ENCODE measurements at regions of chr9 and their contacts with region 1.

Region 1: DNA sequence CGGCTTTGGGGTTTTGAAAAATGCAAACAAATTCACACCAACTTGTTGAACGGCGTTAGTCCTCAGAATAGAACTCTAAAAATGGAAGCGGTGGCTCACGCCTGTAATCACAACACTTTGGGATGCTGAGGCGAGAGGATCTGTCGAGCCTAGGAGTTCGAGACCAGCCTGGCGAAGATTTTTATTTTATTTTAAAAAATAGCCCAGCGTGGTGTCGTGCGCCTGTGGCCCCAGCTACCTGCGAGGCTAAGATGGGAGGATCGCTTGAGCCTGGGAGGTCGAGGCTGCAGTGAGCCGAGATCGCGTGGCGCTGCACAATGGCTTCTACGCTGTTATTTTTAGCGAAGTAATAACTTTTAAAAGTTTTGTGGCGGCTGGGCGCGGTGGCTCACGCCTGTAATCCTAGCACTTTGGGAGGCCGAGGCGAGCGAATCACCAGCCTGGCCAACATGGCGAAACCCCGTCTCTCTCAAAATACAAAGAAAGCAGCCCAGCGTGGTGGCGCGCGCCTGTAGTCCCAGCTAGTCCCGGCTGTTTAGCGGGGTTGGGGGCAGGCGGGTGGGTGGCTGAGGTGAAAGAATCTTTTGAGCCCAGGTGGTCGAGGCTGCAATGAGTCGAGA is 699 bp upstream of the PLIN2 start:
- DNase-seq: peak; percentile 50
- ATAC-seq: peak; percentile 26
- H3K4me3 Mint-ChIP-seq: peak overlapping the region; percentile 94
- H3K27ac Mint-ChIP-seq: peak overlapping the region; percentile 97
- H3K4me1 Mint-ChIP-seq: peaks cover 56% of the 10 kb centered on the region
- H3K27me3 Mint-ChIP-seq: no peaks in the 10 kb centered on the region

Region 2: GRCh38 chr9:18955626-18956025 is 172.4 kb before region 1 on chr9:
- CTCF ChIA-PET with region 1: no interaction called
- POLR2A ChIA-PET with region 1: no interaction called
- DNase-seq: no peak
- ATAC-seq: no peak
- H3K4me3 Mint-ChIP-seq: no peak overlapping the region
- H3K27ac Mint-ChIP-seq: no peak overlapping the region
- H3K4me1 Mint-ChIP-seq: no peaks in the 10 kb centered on the region
- H3K27me3 Mint-ChIP-seq: peaks cover 4% of the 10 kb centered on the region

Region 3: GRCh38 chr9:19161257-19162025 is 33.5 kb after region 1 on chr9:
- CTCF ChIA-PET with region 1: interaction called, 18 read pairs
- POLR2A ChIA-PET with region 1: interaction called, 16 read pairs
- DNase-seq: peak; percentile 74
- ATAC-seq: peak; percentile 98
- H3K4me3 Mint-ChIP-seq: peak overlapping the region; percentile 32
- H3K27ac Mint-ChIP-seq: peak overlapping the region; percentile 87
- H3K4me1 Mint-ChIP-seq: peaks cover 24% of the 10 kb centered on the region
- H3K27me3 Mint-ChIP-seq: no peaks in the 10 kb centered on the region

Measured in activated CD8-positive, alpha-beta T cell treated with anti-CD3 and anti-CD28 coated beads, Interleukin-2, amount 10 ng/mL, durations not matched to agents 7 days and 5 days (primary cell).